Left cardiac atrium (tissue), 4 donors: ENCODE measurements at regions of chr17 and their contacts with region 1.

Region 1: GRCh38 chr17:49575579-49576087 is at the start of gene NXPH3:
- DNase-seq: peak; percentile 73
- ATAC-seq: peak; percentile 68 to 72
- total RNA-seq, gene NXPH3: 3.6 to 6.5 TPM

Region 2: GRCh38 chr17:49543860-49544259 is 31.8 kb before region 1 on chr17:
- intact Hi-C with region 1: no loop called
- DNase-seq: no peak
- ATAC-seq: no peak

Region 3: DNA sequence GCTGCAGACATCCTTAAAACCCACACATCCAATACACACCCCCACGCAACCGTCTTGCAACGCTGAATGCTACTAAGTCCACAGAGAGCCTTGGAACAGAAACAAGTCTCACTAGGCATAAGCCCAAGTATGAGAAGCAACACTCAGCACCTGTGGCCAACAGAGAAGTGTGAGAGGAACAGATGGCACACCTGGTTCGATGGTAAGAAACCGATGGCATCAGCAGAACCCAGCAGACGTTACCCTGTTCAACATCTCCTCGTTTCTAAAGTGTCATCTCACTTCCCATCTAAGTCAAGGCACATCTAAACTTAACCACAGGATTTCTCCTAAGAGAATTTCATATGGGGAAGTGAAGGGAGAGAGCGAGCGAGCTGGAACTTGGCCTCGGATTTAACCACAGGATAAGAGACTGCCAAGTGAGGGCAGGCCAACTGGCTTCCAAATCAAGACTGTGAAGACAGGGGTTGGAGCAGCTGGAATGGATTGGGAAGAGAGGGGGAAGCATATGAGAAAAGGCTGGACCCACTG is 41.0 kb after region 1 on chr17:
- intact Hi-C with region 1: loop called in 1 of 2 experiments (anchors 5 kb)
- DNase-seq: peak; percentile 78
- ATAC-seq: peak; percentile 90 to 94

Region 4: GRCh38 chr17:49629435-49629834 is 53.8 kb after region 1 on chr17:
- intact Hi-C with region 1: no loop called
- DNase-seq: no peak
- ATAC-seq: no peak

Region 5: DNA sequence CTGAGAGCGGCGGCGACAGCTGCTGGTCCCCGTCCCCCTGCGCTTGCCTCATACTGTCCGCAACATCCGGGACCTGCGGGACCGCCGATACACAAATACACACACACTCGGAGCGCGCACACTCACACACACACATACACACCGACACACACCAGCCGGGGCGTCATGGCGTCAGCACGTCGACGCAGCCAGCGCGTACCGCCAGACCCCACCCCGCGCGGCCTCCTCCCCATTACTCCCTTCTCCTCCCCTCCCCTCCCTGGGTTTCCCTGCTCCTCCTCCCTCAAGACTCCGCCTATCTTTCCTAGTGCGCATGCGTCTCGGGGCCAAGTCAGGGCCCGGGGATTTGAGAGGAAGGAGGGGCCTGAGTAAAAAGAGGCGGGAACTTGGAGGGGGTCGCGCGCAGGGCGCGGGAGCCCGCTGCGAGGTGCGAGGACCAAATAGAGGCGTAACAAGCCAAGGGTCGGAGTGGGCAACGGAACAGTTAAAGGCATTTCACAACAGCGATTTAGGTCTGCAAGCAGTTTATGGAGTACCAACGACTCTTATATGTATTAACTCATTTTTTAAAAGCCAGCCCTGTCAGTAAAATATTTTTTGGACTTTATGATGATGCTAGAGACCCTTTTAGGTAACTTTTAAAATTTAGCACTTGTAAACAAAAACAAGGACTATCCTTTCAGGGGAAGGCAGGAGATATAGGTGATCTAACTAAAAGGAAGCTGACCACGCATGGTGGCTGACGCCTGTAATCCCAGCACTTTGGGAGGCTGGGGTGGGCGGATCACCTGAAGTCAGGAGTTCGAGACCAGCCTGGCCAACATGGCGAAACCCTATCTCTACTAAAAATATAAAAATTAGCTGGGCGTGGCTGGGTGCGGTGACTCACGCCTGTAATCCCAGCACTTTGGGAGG is 102.6 kb after region 1 on chr17 and contains the start of gene SPOP:
- intact Hi-C with region 1: loop called in 1 of 2 experiments (anchors 5 kb)
- DNase-seq: peak; percentile 100
- ATAC-seq: peak; percentile 98 to 99
- total RNA-seq, gene SPOP: 60.5 to 69.5 TPM

Region 6: DNA sequence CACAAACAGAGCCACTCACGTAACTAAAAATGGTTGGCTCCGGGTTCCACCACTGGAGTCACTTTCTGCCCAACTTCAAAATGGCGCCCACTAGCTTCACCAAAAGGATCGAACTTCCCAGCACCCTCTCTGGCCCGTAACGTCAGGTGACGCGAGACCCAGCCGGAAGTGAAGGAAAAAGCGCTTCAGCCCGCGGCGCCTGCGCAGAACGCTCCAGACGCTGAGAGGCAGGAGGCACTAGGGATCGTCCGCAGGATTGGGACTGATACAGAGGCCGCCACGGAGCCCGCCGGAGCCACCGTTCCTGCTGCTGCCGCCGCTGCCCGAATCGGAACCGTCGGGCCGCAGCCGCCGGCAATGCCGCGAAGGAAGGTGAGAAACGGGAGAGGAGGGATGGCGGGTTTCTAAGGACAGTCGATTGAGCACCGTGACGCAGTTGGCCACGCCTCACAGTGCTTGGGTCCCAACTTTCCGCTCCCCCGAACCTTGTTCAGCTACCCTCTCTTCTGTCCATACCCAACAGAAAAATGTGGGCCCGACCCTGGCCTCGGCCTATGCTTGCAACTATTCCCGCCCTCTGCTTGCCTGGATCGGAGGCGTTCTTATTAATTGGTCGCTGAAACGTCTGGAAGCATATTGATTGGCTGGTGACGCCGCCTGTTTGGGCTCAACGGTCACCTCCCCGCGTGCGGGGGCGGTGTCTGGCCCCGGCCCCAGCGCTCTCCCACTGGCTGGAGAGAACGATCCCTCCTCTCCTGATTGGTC is 213.0 kb after region 1 on chr17 and contains the start of gene KAT7:
- intact Hi-C with region 1: loop called in 1 of 2 experiments (anchors 5 kb)
- DNase-seq: peak; percentile 99
- ATAC-seq: peak; percentile 96 to 97
- total RNA-seq, gene KAT7: 47.5 to 49.0 TPM

Region 7: GRCh38 chr17:49845321-49845720 is 269.7 kb after region 1 on chr17:
- intact Hi-C with region 1: loop called in 1 of 2 experiments (anchors 5 kb)
- DNase-seq: peak; percentile 72
- ATAC-seq: peak; percentile 75 to 91